Activated T-helper 2 cell treated with anti-CD3 and anti-CD28 coated beads, Interferon-gamma antibody, Interleukin-2, Interleukin-4, amounts not matched to agents 10 μg/mL and 5 μg/mL and 100 μg/mL, durations not matched to agents 14 hours and 24 hours and 36 hours (primary cell): ENCODE measurements at regions of chr6 and their contacts with region 1.

Region 1: GRCh38 chr6:26234421-26235296 is 130.3 kb upstream of the BTN3A2 start:
- DNase-seq: peak; percentile 83
- H3K4me3 Mint-ChIP-seq: peak overlapping the region; percentile 86
- H3K27ac Mint-ChIP-seq: peak overlapping the region; percentile 99
- H3K4me1 Mint-ChIP-seq: peaks cover 44% of the 10 kb centered on the region
- H3K27me3 Mint-ChIP-seq: no peaks in the 10 kb centered on the region

Region 2: GRCh38 chr6:26122793-26123674 is 111.6 kb before region 1 on chr6:
- intact Hi-C with region 1: loop called (anchors 5 kb)
- DNase-seq: peak; percentile 91
- H3K4me3 Mint-ChIP-seq: peak overlapping the region; percentile 100
- H3K27ac Mint-ChIP-seq: peak overlapping the region; percentile 99
- H3K4me1 Mint-ChIP-seq: peaks cover 42% of the 10 kb centered on the region
- H3K27me3 Mint-ChIP-seq: no peaks in the 10 kb centered on the region

Region 3: GRCh38 chr6:26216356-26216885 is 18.2 kb before region 1 on chr6:
- intact Hi-C with region 1: loop called (anchors 2 kb)
- DNase-seq: peak; percentile 87
- H3K4me3 Mint-ChIP-seq: no peak overlapping the region
- H3K27ac Mint-ChIP-seq: no peak overlapping the region
- H3K4me1 Mint-ChIP-seq: peaks cover 24% of the 10 kb centered on the region
- H3K27me3 Mint-ChIP-seq: no peaks in the 10 kb centered on the region

Region 4: GRCh38 chr6:26223650-26224546 is 10.8 kb before region 1 on chr6:
- intact Hi-C with region 1: loop called (anchors 1 kb)
- DNase-seq: peak; percentile 65
- H3K4me3 Mint-ChIP-seq: no peak overlapping the region
- H3K27ac Mint-ChIP-seq: no peak overlapping the region
- H3K4me1 Mint-ChIP-seq: peaks cover 25% of the 10 kb centered on the region
- H3K27me3 Mint-ChIP-seq: no peaks in the 10 kb centered on the region

Region 5: GRCh38 chr6:26249957-26250697 is 15.5 kb after region 1 on chr6:
- intact Hi-C with region 1: loop called (anchors 2 kb)
- DNase-seq: peak; percentile 74
- H3K4me3 Mint-ChIP-seq: peak overlapping the region; percentile 92
- H3K27ac Mint-ChIP-seq: peak overlapping the region; percentile 98
- H3K4me1 Mint-ChIP-seq: peaks cover 46% of the 10 kb centered on the region
- H3K27me3 Mint-ChIP-seq: no peaks in the 10 kb centered on the region

Region 6: GRCh38 chr6:27132532-27133280 is 898.0 kb after region 1 on chr6:
- intact Hi-C with region 1: loop called (anchors 10 kb)
- DNase-seq: peak; percentile 95
- H3K4me3 Mint-ChIP-seq: no peak overlapping the region
- H3K27ac Mint-ChIP-seq: no peak overlapping the region
- H3K4me1 Mint-ChIP-seq: peaks cover 38% of the 10 kb centered on the region
- H3K27me3 Mint-ChIP-seq: no peaks in the 10 kb centered on the region